Activated CD8-positive, alpha-beta memory T cell treated with anti-CD3 and anti-CD28 coated beads, Interleukin-2, amount 10 ng/mL, durations not matched to agents 7 days and 5 days (primary cell): ENCODE measurements at regions of chr3 and their contacts with region 1.

Region 1: GRCh38 chr3:111717601-111718000 is 122.5 kb upstream of the ZBED2 start:
- DNase-seq: peak; percentile 79
- ATAC-seq: peak; percentile 89
- H3K4me3 Mint-ChIP-seq: no peak overlapping the region
- H3K27ac Mint-ChIP-seq: no peak overlapping the region
- H3K4me1 Mint-ChIP-seq: peaks cover 7% of the 10 kb centered on the region
- H3K27me3 Mint-ChIP-seq: no peaks in the 10 kb centered on the region

Region 2: DNA sequence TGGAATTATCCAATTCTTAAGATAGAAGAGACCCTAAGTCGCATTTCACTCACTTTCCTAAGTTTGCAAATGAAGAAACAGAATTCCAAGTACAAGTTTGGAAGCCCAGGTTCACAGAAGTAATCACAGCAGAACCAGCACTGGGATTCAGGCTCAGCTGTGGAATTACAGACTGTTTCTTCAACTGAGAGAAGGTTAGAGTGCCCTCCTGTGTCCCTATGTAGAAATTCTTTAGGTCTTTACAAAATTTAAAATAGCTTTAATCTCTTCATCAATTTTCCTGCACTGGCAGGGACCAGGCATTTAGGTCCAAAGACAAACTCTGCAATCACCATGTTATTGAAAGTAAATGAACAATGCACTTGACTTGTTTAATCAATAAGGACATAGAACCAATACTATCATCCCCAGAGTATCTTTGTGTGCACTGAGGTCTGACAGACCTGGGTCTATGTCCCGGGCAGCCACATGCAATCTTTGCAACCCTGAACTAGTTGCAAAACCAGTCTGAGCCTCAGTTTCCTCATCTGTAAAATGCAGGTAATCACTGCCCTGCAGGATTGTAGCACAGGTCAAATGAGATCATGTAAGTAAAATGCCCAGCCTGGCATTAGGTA is 26.2 kb before region 1 on chr3:
- CTCF ChIA-PET with region 1: interaction called, 21 read pairs
- DNase-seq: no peak
- ATAC-seq: no peak
- H3K4me3 Mint-ChIP-seq: no peak overlapping the region
- H3K27ac Mint-ChIP-seq: peak overlapping the region; percentile 69
- H3K4me1 Mint-ChIP-seq: peaks cover 76% of the 10 kb centered on the region
- H3K27me3 Mint-ChIP-seq: no peaks in the 10 kb centered on the region

Region 3: DNA sequence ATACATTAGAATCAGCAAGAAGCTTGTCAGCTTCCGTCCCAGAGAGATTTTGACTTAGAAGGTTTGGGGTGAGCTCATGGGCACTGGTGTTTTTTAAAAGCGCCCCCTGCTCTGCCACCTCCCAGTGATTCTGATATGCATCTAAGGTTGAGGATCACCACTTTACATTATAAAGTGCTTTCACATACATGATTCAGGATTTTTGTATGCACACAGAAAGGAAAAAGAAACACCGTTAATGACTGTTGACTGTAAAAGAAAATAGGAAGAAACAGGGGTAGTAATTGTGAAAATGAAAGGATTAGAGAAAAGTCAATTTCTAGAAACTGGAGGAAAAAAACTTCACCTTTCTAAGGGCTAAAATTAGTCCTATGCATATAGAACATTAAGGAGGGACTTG is 17.5 kb before region 1 on chr3:
- CTCF ChIA-PET with region 1: interaction called, 14 read pairs
- DNase-seq: no peak
- ATAC-seq: peak; percentile 49
- H3K4me3 Mint-ChIP-seq: peak overlapping the region; percentile 69
- H3K27ac Mint-ChIP-seq: peak overlapping the region; percentile 91
- H3K4me1 Mint-ChIP-seq: peaks cover 35% of the 10 kb centered on the region
- H3K27me3 Mint-ChIP-seq: no peaks in the 10 kb centered on the region

Region 4: GRCh38 chr3:111859974-111860859 is 142.6 kb after region 1 on chr3:
- CTCF ChIA-PET with region 1: interaction called, 51 read pairs
- DNase-seq: peak; percentile 84
- ATAC-seq: peak; percentile 75
- H3K4me3 Mint-ChIP-seq: peak overlapping the region; percentile 91
- H3K27ac Mint-ChIP-seq: peak overlapping the region; percentile 77
- H3K4me1 Mint-ChIP-seq: peaks cover 16% of the 10 kb centered on the region
- H3K27me3 Mint-ChIP-seq: peaks cover 33% of the 10 kb centered on the region

Region 5: GRCh38 chr3:111882799-111883198 is 165.2 kb after region 1 on chr3:
- CTCF ChIA-PET with region 1: no interaction called
- DNase-seq: no peak
- ATAC-seq: peak; percentile 39
- H3K4me3 Mint-ChIP-seq: no peak overlapping the region
- H3K27ac Mint-ChIP-seq: no peak overlapping the region
- H3K4me1 Mint-ChIP-seq: peaks cover 11% of the 10 kb centered on the region
- H3K27me3 Mint-ChIP-seq: no peaks in the 10 kb centered on the region

Region 6: GRCh38 chr3:111978493-111979433 is 261.2 kb after region 1 on chr3 and contains the start of gene ABHD10:
- CTCF ChIA-PET with region 1: interaction called, 22 read pairs
- DNase-seq: peak; percentile 99
- ATAC-seq: peak; percentile 96
- H3K4me3 Mint-ChIP-seq: peak within 1 kb of the TSS; percentile 92
- H3K27ac Mint-ChIP-seq: peak within 1 kb of the TSS; percentile 94
- H3K4me1 Mint-ChIP-seq: peaks cover 39% of the 10 kb centered on the region
- H3K27me3 Mint-ChIP-seq: no peaks in the 10 kb centered on the region
- total RNA-seq, gene ABHD10: 45.2 to 50.7 TPM

Region 7: GRCh38 chr3:112043603-112044201 is 326.1 kb after region 1 on chr3:
- CTCF ChIA-PET with region 1: interaction called, 13 read pairs
- DNase-seq: peak; percentile 66
- ATAC-seq: peak; percentile 96
- H3K4me3 Mint-ChIP-seq: no peak overlapping the region
- H3K27ac Mint-ChIP-seq: no peak overlapping the region
- H3K4me1 Mint-ChIP-seq: peaks cover 5% of the 10 kb centered on the region
- H3K27me3 Mint-ChIP-seq: no peaks in the 10 kb centered on the region